Activated CD8-positive, alpha-beta T cell treated with anti-CD3 and anti-CD28 coated beads, Interleukin-2, amount 10 ng/mL, durations not matched to agents 7 days and 5 days (primary cell): ENCODE measurements at regions of chr5 and their contacts with region 1.

Region 1: DNA sequence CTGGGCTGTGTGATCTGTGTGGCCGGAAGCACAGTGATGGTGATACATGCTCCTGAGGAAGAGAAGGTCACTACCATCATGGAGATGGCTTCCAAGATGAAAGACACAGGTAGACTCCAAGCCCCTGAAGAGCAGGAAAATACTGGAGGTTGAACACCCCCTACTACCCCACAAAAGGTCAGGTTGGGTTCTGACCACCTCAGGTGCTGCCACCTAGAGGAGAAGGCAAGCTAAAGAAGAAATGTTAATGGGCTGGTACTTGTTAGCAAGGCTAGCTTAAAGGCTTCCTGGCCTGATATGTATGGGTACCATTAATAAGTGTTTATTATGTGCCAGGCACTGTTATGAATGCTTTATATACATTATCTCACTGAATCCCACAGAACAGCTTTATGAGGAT is 11.7 kb downstream of the NIPAL4 start:
- DNase-seq: peak; percentile 32
- ATAC-seq: no peak
- H3K4me3 Mint-ChIP-seq: no peak overlapping the region
- H3K27ac Mint-ChIP-seq: no peak overlapping the region
- H3K4me1 Mint-ChIP-seq: no peaks in the 10 kb centered on the region
- H3K27me3 Mint-ChIP-seq: no peaks in the 10 kb centered on the region

Region 2: DNA sequence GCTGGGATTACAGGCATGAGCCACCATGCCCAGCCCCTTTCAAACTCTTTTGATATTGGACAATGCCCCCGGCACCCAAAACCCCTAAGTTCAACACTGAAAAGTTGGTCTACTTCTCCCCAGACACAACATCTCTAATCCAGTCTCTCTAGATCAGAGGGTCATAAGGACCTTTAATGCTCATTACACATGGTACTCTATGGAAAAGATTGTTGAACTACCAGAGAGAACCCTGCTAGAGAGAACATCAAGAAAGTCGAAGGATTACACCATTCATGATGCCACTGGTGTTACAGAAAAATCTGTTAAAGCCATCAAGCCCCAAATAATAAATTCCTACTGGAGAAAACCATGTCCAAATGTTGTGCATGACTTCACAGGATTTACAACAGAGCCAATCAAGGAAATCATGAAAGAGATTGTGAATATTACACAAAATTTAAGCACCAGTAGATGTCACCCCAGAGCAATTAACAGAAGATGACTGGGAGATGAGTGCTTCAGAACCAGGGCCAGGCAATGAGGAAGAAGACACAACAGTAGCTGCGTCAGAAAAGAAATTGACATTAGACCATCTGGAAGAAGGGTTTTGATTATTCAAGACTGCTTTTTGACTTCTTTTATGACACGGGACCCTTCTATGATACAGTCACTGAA is 40.0 kb before region 1 on chr5:
- CTCF ChIA-PET with region 1: interaction called, 23 read pairs
- POLR2A ChIA-PET with region 1: no interaction called
- DNase-seq: peak; percentile 58
- ATAC-seq: peak; percentile 91
- H3K4me3 Mint-ChIP-seq: no peak overlapping the region
- H3K27ac Mint-ChIP-seq: no peak overlapping the region
- H3K4me1 Mint-ChIP-seq: peaks cover 3% of the 10 kb centered on the region
- H3K27me3 Mint-ChIP-seq: peaks cover 42% of the 10 kb centered on the region

Region 3: DNA sequence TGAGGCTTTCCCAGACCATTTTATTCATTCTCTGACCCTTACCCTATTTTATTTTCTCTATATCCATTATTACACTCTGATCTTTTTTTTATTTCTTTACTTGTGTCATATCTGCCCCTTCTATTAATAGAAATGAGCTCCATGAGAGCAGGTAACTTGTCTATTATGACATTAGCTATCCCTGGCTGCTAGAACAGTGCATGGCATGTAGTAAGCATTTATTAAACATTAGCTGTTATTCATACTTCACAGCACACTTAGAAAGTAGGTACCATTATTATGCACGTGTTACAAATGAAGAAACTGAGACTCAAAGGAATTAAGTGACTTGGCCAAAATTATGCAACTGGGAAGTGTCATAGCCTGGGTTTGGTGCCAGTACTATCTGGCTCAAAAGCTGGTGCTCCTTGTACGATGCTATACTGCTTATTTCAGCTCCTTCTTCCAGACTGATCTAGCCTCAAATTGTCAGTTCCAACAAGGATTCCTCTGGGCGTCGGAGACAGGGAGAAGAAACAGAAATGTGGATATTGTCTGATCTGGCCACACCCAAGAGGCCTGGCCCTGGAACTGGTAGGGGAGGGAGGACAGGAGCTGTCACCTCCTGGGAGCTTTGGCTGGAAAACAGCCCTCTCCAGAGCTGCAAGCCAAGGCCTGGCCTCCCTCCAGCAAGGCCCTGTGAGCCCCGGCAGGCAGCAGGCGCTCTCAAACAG is 22.5 kb before region 1 on chr5:
- CTCF ChIA-PET with region 1: interaction called, 15 read pairs
- POLR2A ChIA-PET with region 1: no interaction called
- DNase-seq: no peak
- ATAC-seq: no peak
- H3K4me3 Mint-ChIP-seq: no peak overlapping the region
- H3K27ac Mint-ChIP-seq: no peak overlapping the region
- H3K4me1 Mint-ChIP-seq: no peaks in the 10 kb centered on the region
- H3K27me3 Mint-ChIP-seq: peaks cover 16% of the 10 kb centered on the region

Region 4: DNA sequence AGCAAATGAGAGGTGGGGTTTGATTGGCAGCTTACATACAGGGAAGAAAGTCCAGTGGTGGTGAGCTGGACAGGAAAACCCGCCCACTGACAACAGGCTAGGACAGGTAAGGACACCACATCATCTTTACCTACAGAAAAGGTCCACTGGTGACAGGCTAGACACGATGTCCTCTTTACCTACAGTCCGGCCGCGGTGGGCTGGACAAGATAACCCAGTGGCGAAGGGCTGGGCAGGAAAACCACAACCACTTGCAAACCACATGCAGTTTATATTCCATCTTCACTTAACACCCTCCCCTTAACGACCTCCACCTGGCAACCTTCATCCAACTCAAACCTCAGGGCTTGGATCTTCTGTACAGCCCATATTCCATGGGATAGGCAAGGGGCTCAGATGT is 16.7 kb before region 1 on chr5:
- CTCF ChIA-PET with region 1: interaction called, 15 read pairs
- POLR2A ChIA-PET with region 1: no interaction called
- DNase-seq: no peak
- ATAC-seq: no peak
- H3K4me3 Mint-ChIP-seq: no peak overlapping the region
- H3K27ac Mint-ChIP-seq: no peak overlapping the region
- H3K4me1 Mint-ChIP-seq: peaks cover 10% of the 10 kb centered on the region
- H3K27me3 Mint-ChIP-seq: peaks cover 32% of the 10 kb centered on the region

Region 5: DNA sequence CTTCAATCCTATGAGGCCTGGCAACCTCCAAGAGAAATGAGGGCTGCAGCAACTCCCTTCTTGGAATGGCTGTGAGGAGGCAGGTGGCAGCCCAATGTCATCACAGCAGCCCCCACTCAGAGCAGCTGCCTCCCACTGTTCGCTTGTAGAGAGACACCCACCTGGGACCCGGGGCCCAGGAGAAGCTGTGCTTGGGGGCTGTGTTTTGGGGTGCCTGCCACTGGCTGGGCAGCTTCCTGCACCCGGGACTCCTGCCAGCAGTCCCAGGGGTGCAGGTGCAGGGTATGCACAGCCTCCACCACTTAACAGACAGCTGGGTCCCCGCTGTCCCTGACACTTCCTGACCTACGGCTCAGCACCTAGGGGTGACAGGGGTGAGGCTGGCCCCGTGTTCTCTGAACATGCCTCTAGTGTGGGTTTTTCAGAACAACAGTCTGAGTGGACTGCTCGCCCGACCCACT is 14.5 kb after region 1 on chr5:
- CTCF ChIA-PET with region 1: interaction called, 13 read pairs
- POLR2A ChIA-PET with region 1: no interaction called
- DNase-seq: no peak
- ATAC-seq: peak; percentile 45
- H3K4me3 Mint-ChIP-seq: no peak overlapping the region
- H3K27ac Mint-ChIP-seq: peak overlapping the region; percentile 44
- H3K4me1 Mint-ChIP-seq: peaks cover 38% of the 10 kb centered on the region
- H3K27me3 Mint-ChIP-seq: no peaks in the 10 kb centered on the region